ENCODE measurements at regions of chr3 and their contacts with region 1.

Region 1: DNA sequence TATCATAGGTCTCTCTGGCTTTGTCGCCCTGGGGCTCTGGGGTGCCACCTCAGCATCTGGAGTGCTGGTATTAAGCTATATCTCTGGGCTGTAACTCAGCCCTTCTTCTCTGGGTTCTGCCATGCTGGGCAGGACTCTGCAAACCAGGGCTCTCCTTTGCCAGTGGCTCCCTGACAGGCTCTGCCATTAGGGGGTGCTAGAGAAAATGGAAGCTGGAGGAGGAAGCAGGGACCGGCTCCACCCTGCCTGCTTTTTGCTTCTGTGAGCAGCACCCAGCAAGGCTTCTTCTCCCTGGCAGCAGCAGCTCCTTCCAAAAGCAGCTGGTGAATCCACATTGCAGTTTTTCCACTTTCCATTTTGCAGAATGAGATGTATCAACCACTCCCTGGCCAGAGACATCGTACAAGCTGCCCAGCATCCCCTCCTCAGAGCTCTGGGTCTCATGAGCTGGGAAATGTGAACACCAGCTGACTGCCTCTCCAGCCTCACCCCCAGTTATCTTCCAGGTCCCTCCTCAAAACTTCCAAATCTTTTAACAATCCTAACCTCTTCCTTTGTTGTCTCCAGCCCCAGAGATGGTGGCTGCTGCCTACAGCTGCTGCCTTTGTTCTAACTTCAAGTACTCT is 165.0 kb downstream of the ABHD5 start:
- DNase-seq: peak; percentile 50
- H3K4me3 Mint-ChIP-seq: no peak overlapping the region
- H3K27ac Mint-ChIP-seq: no peak overlapping the region
- H3K4me1 Mint-ChIP-seq: no peaks in the 10 kb centered on the region
- H3K27me3 Mint-ChIP-seq: peaks cover 47% of the 10 kb centered on the region

Region 2: GRCh38 chr3:43844757-43845156 is 11.0 kb before region 1 on chr3:
- CTCF ChIA-PET with region 1: interaction called, 13 read pairs
- POLR2A ChIA-PET with region 1: no interaction called
- DNase-seq: no peak
- H3K4me3 Mint-ChIP-seq: no peak overlapping the region
- H3K27ac Mint-ChIP-seq: no peak overlapping the region
- H3K4me1 Mint-ChIP-seq: no peaks in the 10 kb centered on the region
- H3K27me3 Mint-ChIP-seq: peaks cover 3% of the 10 kb centered on the region

Region 3: GRCh38 chr3:44198284-44199269 is 342.8 kb after region 1 on chr3:
- CTCF ChIA-PET with region 1: interaction called, 28 read pairs
- POLR2A ChIA-PET with region 1: no interaction called
- DNase-seq: peak; percentile 69
- H3K4me3 Mint-ChIP-seq: no peak overlapping the region
- H3K27ac Mint-ChIP-seq: no peak overlapping the region
- H3K4me1 Mint-ChIP-seq: no peaks in the 10 kb centered on the region
- H3K27me3 Mint-ChIP-seq: peaks cover 11% of the 10 kb centered on the region